Calu3 (cell line): ENCODE measurements at regions of chr20 and their contacts with region 1.

Region 1: DNA sequence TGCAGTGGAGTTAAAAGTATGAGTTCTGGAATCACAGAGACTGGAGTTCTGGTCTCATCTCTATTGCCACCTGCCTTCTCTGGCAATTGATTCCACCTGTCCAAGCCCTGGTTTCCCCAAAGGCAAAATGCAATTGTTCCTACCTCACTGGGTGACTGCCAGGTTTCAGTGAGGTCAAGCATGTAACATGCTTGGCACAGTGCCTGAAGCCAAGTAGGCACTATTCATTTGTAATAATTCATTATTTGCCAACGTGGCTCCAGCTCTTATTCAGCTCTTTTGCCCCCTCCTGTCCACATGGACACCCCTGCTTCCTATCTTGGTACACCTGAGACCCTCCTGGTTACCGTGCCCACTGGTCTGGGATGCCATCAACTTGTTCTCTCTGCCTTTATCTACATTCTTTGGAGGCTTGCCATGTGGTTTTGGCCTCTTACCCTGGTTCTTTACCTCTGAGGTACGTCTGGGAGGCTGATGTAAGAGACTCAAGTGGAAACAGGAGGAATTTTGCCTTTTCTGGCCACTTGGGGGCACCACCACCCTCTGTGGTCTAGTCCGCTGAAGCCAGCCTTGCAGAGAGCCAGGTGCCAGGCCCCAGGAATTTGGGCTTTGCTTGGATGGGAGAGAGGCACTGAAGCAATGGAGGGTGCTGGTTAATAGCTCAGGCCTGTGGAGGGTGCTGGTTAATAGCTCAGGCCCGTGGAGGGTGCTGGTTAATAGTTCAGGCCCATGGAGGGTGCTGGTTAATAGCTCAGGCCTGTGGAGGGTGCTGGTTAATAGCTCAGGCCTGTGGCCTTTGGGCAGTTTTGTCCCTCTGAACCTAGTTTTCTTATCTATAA is 1.7 kb downstream of the KCNK15 start:
- DNase-seq: peak; percentile 98
- H3K4me3 Mint-ChIP-seq: peak overlapping the region; percentile 47
- H3K27ac Mint-ChIP-seq: peak overlapping the region; percentile 97
- H3K4me1 Mint-ChIP-seq: peaks cover 27% of the 10 kb centered on the region
- H3K27me3 Mint-ChIP-seq: peaks cover 35% of the 10 kb centered on the region
- CTCF ChIP-seq: peak; percentile 87

Region 2: GRCh38 chr20:43293063-43293786 is 1454.2 kb before region 1 on chr20:
- CTCF ChIA-PET with region 1: no interaction called
- intact Hi-C with region 1: no loop called
- DNase-seq: no peak
- H3K4me3 Mint-ChIP-seq: no peak overlapping the region
- H3K27ac Mint-ChIP-seq: no peak overlapping the region
- H3K4me1 Mint-ChIP-seq: no peaks in the 10 kb centered on the region
- H3K27me3 Mint-ChIP-seq: peaks cover 71% of the 10 kb centered on the region
- CTCF ChIP-seq: no peak

Region 3: DNA sequence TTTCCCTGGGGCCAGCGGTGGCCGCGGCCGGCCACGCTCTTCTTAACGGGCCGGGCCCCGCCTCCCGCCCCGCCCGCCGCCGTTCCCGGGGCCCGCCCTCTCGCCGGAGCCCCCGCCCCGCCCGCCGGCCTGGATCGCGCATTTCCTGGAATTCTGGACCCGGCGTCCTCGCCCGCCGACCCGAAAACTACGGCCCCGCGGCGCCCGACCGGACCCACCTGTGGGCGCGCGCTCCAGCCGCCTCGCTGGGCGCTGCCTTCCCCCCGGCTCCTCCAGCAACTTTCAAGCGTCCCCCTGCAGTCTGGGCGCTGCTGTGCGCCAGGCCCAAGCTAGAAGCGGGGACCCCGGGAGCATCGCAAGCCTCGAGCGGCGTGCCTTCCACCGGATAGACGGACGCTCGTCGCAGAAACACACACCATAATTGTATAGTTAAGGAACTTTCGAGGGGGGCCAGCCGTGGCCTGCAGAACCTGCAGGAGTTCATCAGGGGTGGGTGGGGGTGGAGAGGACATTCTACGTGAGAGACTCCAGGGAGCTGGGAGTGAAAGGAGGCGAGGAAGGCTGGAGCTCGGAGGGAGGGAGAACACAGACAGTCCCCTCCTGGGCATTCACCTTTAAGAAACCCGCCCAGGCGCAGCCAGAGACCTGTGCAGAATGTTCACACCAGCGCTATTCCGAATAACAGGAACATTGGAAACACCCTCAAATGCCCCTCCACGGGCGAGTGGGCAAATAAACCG is 95.5 kb before region 1 on chr20 and contains the start of gene ADA:
- CTCF ChIA-PET with region 1: interaction called, 17 read pairs
- intact Hi-C with region 1: no loop called
- DNase-seq: peak; percentile 83
- H3K4me3 Mint-ChIP-seq: peak within 1 kb of the TSS; percentile 69
- H3K27ac Mint-ChIP-seq: peak within 1 kb of the TSS; percentile 2
- H3K4me1 Mint-ChIP-seq: no peaks in the 10 kb centered on the region
- H3K27me3 Mint-ChIP-seq: peaks cover 51% of the 10 kb centered on the region
- CTCF ChIP-seq: peak; percentile 32
- total RNA-seq, gene ADA: 7.5 and 8.9 TPM in 2 replicates

Region 4: GRCh38 chr20:44683263-44684046 is 63.9 kb before region 1 on chr20:
- CTCF ChIA-PET with region 1: interaction called, 11 read pairs
- intact Hi-C with region 1: no loop called
- DNase-seq: peak; percentile 90
- H3K4me3 Mint-ChIP-seq: no peak overlapping the region
- H3K27ac Mint-ChIP-seq: no peak overlapping the region
- H3K4me1 Mint-ChIP-seq: peaks cover 36% of the 10 kb centered on the region
- H3K27me3 Mint-ChIP-seq: no peaks in the 10 kb centered on the region
- CTCF ChIP-seq: peak; percentile 84

Region 5: GRCh38 chr20:44866703-44867335 is 119.4 kb after region 1 on chr20:
- CTCF ChIA-PET with region 1: interaction called, 15 read pairs
- intact Hi-C with region 1: loop called (anchors 1 kb)
- DNase-seq: no peak
- H3K4me3 Mint-ChIP-seq: no peak overlapping the region
- H3K27ac Mint-ChIP-seq: no peak overlapping the region
- H3K4me1 Mint-ChIP-seq: peaks cover 8% of the 10 kb centered on the region
- H3K27me3 Mint-ChIP-seq: peaks cover 29% of the 10 kb centered on the region
- CTCF ChIP-seq: no peak

Region 6: GRCh38 chr20:44885392-44886265 is 138.2 kb after region 1 on chr20 and contains the start of gene YWHAB:
- CTCF ChIA-PET with region 1: interaction called, 12 read pairs
- intact Hi-C with region 1: loop called (anchors 5 kb)
- DNase-seq: peak; percentile 100
- H3K4me3 Mint-ChIP-seq: peak within 1 kb of the TSS; percentile 95
- H3K27ac Mint-ChIP-seq: peak within 1 kb of the TSS; percentile 90
- H3K4me1 Mint-ChIP-seq: peaks cover 27% of the 10 kb centered on the region
- H3K27me3 Mint-ChIP-seq: no peaks in the 10 kb centered on the region
- CTCF ChIP-seq: no peak
- total RNA-seq, gene YWHAB: 377 and 384 TPM in 2 replicates